Right ventricle myocardium inferior (tissue), 1 donor: ENCODE measurements at regions of chr12 and their contacts with region 1.

Region 1: GRCh38 chr12:105382771-105383622 is 52.5 kb downstream of the C12orf75 start:
- DNase-seq: no peak
- ATAC-seq: peak; percentile 67

Region 2: DNA sequence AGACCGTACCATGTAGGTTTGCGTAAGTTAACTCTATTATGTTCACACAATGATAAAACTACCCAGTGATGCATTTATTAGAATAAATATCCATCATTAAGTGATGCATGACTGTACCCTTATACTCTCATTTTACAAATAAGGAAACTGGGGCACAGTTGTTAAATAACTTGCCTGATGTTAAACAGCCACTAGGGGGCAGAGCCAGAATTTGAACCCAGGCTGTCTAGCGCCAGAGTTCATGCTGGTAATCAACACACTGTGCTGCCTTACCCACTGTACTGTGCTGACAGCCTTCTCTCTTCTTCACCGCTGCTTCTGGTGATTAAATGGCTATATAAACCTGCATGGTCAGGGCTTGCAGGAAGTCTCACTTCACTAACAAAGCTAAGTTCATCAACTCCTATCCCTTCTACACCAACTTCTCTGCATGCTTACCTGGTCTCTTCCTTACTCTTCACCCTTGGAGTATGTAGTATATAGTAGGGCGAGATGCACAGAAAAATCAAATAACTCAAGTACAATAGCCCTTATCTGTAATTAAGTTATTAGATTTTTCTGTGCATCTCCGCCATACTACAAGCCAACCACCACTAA is 103.4 kb before region 1 on chr12:
- intact Hi-C with region 1: loop called (anchors 5 kb)
- DNase-seq: no peak
- ATAC-seq: no peak

Region 3: GRCh38 chr12:105741744-105742566 is 359.0 kb after region 1 on chr12:
- intact Hi-C with region 1: no loop called
- DNase-seq: no peak
- ATAC-seq: peak; percentile 45

Region 4: DNA sequence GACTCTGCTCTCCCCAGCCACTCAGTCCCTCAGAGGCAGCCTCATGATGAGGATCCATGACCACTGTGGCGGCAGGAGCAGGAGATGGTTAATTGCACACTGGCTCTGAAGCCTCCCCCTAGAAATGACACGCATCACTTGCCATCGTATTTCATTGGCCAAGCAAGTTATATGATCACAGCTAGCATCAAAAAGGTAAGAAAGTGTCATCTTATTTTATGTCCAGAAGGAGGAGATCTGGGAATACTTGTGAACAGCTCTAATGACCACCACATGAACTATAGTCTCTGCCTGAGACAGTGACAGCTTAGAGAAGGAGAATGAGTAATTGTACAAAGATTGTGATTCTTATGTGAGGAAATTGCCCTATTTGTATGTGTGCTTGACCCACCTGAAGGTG is 392.3 kb after region 1 on chr12:
- intact Hi-C with region 1: no loop called
- DNase-seq: no peak
- ATAC-seq: peak; percentile 37